PC-3 (cell line): ENCODE measurements at regions of chr17 and their contacts with region 1.

Region 1: GRCh38 chr17:43388359-43389045 is 10.3 kb upstream of the ARL4D start:
- DNase-seq: peak; percentile 79
- ATAC-seq: peak; percentile 87
- H3K4me3 ChIP-seq: peak overlapping the region; percentile 79
- H3K27ac ChIP-seq: peak overlapping the region; percentile 68
- H3K4me1 ChIP-seq: peaks cover 3% of the 10 kb centered on the region; the same call in 1 of the 2 replicates
- H3K27me3 ChIP-seq: no peaks in the 10 kb centered on the region
- CTCF ChIP-seq: no peak

Region 2: DNA sequence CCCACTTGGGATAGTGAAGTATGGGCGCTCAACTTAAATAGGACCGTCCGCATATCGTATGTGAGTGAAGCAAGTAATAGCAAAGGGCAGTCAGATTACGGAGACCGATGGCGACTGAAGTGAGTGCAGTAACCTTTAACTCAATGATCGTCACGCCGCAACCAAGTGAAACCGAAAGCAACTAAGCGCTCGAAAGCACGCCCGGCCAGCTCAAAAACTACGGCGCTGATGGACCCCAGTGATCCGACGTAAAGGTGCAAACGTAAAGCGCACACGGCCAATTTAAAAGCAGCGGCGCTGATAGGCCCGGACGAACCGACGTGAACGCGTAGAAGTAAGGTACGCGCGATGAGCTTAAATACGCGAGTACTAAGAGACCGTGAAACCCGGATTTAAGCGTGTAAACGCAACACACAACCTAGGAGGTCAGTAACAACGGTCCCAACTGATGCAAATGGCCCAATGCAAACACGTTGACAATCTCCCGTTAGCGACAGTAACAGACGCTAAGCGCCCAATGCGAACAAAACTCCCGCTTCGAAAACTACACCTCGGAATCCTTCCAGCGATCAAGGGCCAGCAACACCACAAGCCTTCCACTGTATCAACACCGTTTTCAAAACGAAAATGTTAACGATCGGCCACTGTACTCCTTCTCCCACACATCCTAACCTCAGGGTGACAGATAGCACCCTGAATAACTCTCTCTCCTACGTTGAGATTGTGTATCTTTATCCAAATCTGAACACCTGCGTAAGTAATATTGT is 27.6 kb before region 1 on chr17:
- CTCF ChIA-PET with region 1: no interaction called
- POLR2A ChIA-PET with region 1: interaction called, 19 read pairs
- intact Hi-C with region 1: no loop called
- DNase-seq: peak; percentile 97
- ATAC-seq: peak; percentile 71
- H3K4me3 ChIP-seq: peak overlapping the region; percentile 75
- H3K27ac ChIP-seq: peak overlapping the region; percentile 98
- H3K4me1 ChIP-seq: peaks cover 42% of the 10 kb centered on the region
- H3K27me3 ChIP-seq: no peaks in the 10 kb centered on the region
- CTCF ChIP-seq: no peak

Region 3: DNA sequence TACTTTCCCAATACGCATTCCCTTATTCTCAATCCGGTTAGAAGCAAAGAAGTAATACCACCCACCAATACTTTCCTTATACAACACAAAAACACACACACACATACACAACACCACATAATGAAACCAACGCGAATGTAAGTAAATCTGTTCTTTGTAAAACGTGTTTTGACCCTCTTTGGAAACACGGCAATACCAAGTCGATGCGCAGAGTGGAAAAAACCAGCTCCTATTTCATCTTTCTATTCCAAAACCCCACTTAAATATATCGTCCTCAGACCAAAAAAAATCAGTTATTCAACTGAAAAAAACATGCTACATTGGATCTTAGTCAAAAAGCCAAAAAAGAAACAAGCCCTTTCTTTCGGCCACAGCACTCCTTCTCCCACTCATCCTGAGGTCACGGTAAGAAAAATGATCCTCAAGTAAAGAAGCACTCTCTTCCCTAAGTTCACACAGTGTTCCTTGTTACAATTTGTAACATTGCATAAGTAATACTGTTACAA is 20.7 kb before region 1 on chr17:
- CTCF ChIA-PET with region 1: no interaction called
- POLR2A ChIA-PET with region 1: interaction called, 38 read pairs
- intact Hi-C with region 1: loop called (anchors 2 kb)
- DNase-seq: peak; percentile 90
- ATAC-seq: peak; percentile 73
- H3K4me3 ChIP-seq: peak overlapping the region; percentile 66
- H3K27ac ChIP-seq: peak overlapping the region; percentile 92
- H3K4me1 ChIP-seq: peaks cover 12% of the 10 kb centered on the region
- H3K27me3 ChIP-seq: no peaks in the 10 kb centered on the region
- CTCF ChIP-seq: no peak

Region 4: DNA sequence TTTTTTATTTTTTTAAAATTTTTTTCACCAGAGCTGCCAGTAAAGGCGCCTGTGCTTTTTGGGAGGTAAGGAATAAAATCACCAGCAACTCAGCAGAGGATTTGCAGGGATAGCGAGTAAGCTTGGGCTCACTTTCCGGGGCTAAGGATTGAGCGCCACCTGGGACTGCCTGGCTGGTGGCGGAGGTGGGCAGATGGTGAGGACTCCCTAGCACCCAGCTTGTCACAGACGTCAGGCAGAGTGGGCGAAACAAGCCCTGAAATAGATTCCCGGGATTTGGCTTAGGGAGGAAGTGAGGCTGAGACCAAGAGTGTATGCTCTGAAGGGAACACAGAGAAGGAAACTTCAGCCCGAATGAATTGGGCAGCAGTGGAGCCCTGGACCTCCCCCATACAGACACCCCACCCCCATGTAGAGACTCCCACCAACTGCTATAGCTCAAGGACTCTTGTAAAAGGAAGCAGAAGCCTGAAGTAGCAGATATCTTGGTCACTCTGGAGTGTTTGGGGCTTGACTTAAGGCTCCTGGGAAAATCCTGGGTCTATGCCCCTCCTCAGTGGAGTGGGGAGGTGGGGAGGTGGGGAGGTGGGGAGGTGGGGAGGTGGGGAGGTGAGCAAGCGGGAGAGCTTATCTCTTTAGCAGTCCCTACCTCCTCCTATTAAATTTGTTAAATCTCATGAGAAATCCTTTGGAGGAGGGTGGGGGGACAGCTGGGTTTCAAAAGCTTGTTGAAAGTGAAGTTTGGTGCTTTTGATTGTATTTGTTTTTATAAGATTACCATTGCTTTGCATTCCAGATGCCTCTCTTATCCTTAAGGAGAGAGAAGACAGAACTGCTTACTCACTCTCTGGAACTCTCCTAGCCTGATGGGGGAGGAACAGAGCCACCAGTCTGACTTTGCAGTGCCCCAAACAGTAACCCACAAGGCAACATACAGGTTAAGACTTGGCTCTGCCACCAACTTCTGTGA is 18.5 kb after region 1 on chr17:
- CTCF ChIA-PET with region 1: no interaction called
- POLR2A ChIA-PET with region 1: no interaction called
- intact Hi-C with region 1: no loop called
- DNase-seq: no peak
- ATAC-seq: no peak
- H3K4me3 ChIP-seq: no peak overlapping the region
- H3K27ac ChIP-seq: no peak overlapping the region
- H3K4me1 ChIP-seq: peaks cover 4% of the 10 kb centered on the region; the same call in 1 of the 2 replicates
- H3K27me3 ChIP-seq: no peaks in the 10 kb centered on the region
- CTCF ChIP-seq: no peak

Region 5: GRCh38 chr17:43483674-43484372 is 95.3 kb after region 1 on chr17 and contains the start of gene DHX8:
- CTCF ChIA-PET with region 1: interaction called, 21 read pairs
- POLR2A ChIA-PET with region 1: interaction called, 8 read pairs
- intact Hi-C with region 1: no loop called
- DNase-seq: peak; percentile 95
- ATAC-seq: peak; percentile 93
- H3K4me3 ChIP-seq: peak within 1 kb of the TSS; percentile 94
- H3K27ac ChIP-seq: peak within 1 kb of the TSS; percentile 65
- H3K4me1 ChIP-seq: peaks cover 17% of the 10 kb centered on the region; the same call in 1 of the 2 replicates
- H3K27me3 ChIP-seq: no peaks in the 10 kb centered on the region
- CTCF ChIP-seq: peak; percentile 99
- total RNA-seq, gene DHX8: 34.5 and 41.9 TPM in 2 replicates

Region 6: DNA sequence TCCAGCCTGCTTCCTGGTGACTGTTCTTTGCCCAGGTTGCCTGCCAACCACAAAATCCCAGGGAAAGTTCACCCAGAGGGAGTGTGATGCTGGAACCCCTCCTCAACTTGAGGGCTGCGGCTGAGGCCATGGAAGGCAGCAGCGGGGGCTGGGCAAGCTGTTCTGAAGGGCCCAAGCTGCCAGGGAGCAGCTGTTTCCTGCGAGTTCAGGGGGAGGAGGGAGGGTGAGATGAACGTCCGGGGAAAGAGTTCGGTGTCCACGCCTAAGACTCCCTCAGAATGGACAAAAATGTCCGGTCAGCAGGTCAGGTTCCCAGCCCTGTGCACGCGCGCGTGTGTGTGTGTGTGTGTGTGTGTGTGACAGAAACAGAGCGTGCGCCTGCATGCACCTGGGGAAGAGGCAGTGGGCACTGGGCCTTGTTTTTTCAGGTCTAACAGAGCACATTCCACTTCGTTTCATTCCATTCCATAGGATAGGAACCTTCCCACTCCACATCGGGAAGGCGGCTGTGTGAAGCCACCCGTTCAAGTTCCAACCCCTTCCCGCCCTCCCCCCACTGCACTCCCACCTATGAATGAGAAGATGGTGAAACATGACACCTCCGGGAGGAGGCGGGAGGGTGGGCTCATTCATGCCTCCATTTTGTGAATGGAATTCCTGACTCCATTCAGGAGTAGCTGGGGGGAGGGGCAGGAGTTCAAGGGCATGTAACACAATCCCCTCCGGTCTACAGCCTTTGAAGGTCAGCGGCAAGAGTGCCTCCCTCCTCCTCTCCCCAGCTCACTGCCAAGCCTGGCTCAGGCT is 142.0 kb after region 1 on chr17:
- CTCF ChIA-PET with region 1: no interaction called
- POLR2A ChIA-PET with region 1: no interaction called
- intact Hi-C with region 1: no loop called
- DNase-seq: no peak
- ATAC-seq: no peak
- H3K4me3 ChIP-seq: no peak overlapping the region
- H3K27ac ChIP-seq: no peak overlapping the region
- H3K4me1 ChIP-seq: no peaks in the 10 kb centered on the region
- H3K27me3 ChIP-seq: no peaks in the 10 kb centered on the region
- CTCF ChIP-seq: no peak